Lower leg skin (tissue), 4 donors: ENCODE measurements at regions of chr13 and their contacts with region 1.

Region 1: GRCh38 chr13:35016362-35017112 is 74.5 kb downstream of the NBEA start:
- DNase-seq: no peak
- H3K4me3 ChIP-seq: no peak overlapping the region
- CTCF ChIP-seq: no peak
- POLR2A ChIP-seq: no peak

Region 2: DNA sequence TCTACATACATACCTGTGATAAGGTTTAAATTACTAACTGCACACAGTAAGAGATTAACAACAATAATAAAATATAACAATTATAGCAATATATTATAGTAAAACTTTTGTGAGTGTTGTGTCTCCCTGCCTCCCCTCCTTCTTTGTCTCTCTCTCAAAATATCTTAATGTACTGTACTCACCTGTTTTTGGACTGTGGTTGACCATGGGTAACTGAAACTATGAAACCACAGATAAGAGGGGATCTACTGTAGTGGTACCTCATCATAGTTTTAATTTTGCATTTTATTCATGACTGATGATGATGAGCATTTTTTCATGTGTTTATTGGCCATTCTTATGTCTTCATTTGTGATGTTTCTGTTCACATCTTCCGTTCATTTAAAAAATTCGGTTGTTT is 30.1 kb after region 1 on chr13:
- intact Hi-C with region 1: loop called (anchors 1 kb)
- DNase-seq: no peak
- H3K4me3 ChIP-seq: no peak overlapping the region
- CTCF ChIP-seq: no peak
- POLR2A ChIP-seq: no peak